Esophagus muscularis mucosa (tissue), 4 donors: ENCODE measurements at regions of chr14 and their contacts with region 1.

Region 1: DNA sequence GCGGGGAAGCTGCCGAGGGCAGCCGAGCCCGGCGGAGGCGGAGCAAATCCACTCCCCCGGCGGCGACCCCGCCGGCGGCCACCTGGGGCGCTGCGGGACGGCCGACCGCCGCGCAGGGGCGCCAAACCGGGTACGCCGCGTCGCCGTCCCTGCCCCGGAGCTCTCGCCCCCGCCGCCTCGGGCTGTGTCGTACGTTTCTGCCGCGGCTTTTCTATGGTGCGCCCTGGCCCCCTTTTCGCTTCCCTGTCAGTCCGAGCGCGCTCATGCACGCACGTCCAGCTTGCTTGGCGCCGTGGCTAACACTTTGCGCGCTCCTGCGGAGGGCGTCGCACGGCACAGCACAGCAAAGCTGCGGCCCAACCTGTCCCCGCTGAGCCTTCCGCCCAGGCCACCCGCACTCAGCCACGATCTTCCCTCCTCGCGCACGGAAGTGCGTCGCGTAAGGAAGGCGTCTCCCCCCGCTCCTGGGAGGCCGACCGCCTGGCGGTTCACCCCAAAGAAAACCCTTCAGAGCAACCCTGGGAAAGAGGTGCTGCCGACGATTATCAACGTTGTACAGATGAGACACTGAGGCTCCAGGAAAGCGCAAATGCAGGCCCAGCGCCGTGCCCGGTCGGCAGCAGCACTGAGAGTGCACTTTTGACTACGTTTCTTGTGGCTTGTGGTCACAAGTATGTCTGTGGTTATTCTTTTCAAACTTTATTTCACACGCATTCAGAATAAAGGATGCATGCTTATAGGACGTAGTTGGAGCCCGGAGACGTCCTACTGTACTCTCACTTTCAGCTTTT is at the start of gene HECTD1:
- DNase-seq: peak; percentile 93
- H3K4me3 ChIP-seq: peak within 1 kb of the TSS; percentile 60 to 98 (median 84)
- H3K27ac ChIP-seq: peak within 1 kb of the TSS; percentile 93 to 100 (median 100)
- H3K4me1 ChIP-seq: peaks cover 16 to 52% (median 48%) of the 10 kb centered on the region in 4 donors
- H3K27me3 ChIP-seq: no peaks in the 10 kb centered on the region
- CTCF ChIP-seq: peak; percentile 67 to 92 (median 86)
- EP300 ChIP-seq: no peak
- POLR2A ChIP-seq: peak; percentile 16
- total RNA-seq, gene HECTD1: 177 to 224 (median 206) TPM

Region 2: GRCh38 chr14:31166271-31166710 is 41.7 kb before region 1 on chr14:
- intact Hi-C with region 1: loop called (anchors 5 kb)
- DNase-seq: no peak
- H3K4me3 ChIP-seq: no peak overlapping the region
- H3K27ac ChIP-seq: peak overlapping the region; percentile 76 to 84 (median 80)
- H3K4me1 ChIP-seq: peaks cover 16 to 48% (median 37%) of the 10 kb centered on the region in 4 donors
- H3K27me3 ChIP-seq: no peaks in the 10 kb centered on the region
- CTCF ChIP-seq: no peak
- EP300 ChIP-seq: no peak
- POLR2A ChIP-seq: no peak

Region 3: DNA sequence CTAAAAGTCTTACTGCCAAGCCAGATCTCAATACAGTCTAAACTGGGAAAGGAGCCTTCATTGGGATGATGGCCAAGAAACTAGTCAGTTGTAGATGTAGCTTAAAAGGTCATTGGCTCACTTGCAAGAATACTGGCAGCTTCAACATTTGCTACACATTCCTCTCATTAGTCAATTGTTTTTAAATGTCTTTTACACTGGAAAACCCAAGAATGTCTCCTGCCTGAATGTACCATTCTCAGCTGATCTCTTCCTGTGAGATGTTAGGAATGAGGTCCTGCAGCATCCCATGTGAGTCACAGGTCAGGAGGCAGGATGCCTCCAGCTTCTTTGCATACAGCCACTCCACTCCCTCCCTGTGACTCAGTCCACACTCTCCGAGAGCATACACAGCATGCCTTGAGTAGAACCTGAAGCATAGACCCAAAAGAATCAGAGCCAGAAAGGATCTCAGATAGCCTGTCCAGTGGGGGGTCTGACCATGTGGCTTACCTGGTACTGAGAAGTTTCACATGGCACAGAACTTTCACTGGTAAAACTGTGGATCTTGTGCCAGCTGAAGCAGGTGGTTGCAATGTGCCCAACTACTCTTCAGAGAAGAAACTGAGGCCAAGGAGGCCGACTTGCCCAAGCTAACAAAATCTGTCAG is 55.7 kb after region 1 on chr14:
- intact Hi-C with region 1: loop called (anchors 5 kb)
- DNase-seq: no peak
- H3K4me3 ChIP-seq: peak overlapping the region in 1 of 4 donors; percentile 14
- H3K27ac ChIP-seq: peak overlapping the region; percentile 84 to 91 (median 89)
- H3K4me1 ChIP-seq: peaks cover 38 to 57% (median 49%) of the 10 kb centered on the region in 4 donors
- H3K27me3 ChIP-seq: no peaks in the 10 kb centered on the region
- CTCF ChIP-seq: no peak
- EP300 ChIP-seq: no peak
- POLR2A ChIP-seq: no peak

Region 4: DNA sequence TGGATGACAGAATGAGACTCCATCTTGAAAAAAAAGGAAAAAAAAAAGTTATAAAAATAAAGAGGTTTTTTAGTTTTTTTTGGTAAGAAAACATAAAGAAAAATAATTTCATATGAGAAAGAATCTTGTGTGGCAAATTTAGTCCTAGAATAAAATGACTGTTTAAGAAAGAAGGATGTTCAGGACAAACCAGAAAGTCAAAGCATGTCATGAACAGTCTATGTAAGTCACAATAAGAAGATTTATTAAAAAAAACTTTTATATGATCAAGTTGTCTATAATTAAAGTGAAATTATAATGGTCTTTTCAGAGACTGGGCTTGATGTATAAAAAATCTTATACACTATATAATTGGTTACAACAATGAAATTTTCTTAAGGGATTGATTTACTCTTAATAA is 67.8 kb after region 1 on chr14:
- intact Hi-C with region 1: no loop called
- DNase-seq: no peak
- H3K4me3 ChIP-seq: no peak overlapping the region
- H3K27ac ChIP-seq: no peak overlapping the region
- H3K4me1 ChIP-seq: peaks cover 0 to 9% (median 7%) of the 10 kb centered on the region in 4 donors
- H3K27me3 ChIP-seq: no peaks in the 10 kb centered on the region
- CTCF ChIP-seq: no peak
- EP300 ChIP-seq: no peak
- POLR2A ChIP-seq: no peak

Region 5: DNA sequence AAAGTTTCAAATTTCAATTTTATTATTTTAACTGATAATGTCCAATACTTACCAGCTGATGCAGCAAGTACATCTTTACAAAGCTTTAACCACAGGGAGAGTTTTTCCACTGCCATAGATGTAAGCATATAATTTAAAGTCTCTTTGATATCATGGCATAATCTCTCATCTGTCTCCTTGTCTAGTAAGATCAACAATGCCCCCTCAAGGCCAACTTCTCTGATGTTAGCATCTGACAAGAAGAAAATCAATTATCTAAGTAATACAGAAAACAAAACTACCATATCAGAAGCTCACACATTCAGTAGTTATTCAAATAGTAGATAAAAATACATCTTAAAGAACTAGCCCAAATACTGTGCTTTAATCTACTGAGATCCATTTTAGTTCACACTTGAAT is 118.2 kb after region 1 on chr14:
- intact Hi-C with region 1: loop called (anchors 10 kb)
- DNase-seq: no peak
- H3K4me3 ChIP-seq: no peak overlapping the region
- H3K27ac ChIP-seq: no peak overlapping the region
- H3K4me1 ChIP-seq: peaks cover 0 to 14% (median 13%) of the 10 kb centered on the region in 4 donors
- H3K27me3 ChIP-seq: no peaks in the 10 kb centered on the region
- CTCF ChIP-seq: no peak
- EP300 ChIP-seq: no peak
- POLR2A ChIP-seq: no peak

Region 6: GRCh38 chr14:31357279-31357678 is 149.3 kb after region 1 on chr14:
- intact Hi-C with region 1: loop called (anchors 10 kb)
- DNase-seq: no peak
- H3K4me3 ChIP-seq: no peak overlapping the region
- H3K27ac ChIP-seq: no peak overlapping the region
- H3K4me1 ChIP-seq: peaks cover 4 to 10% (median 6%) of the 10 kb centered on the region in 4 donors
- H3K27me3 ChIP-seq: no peaks in the 10 kb centered on the region
- CTCF ChIP-seq: no peak
- EP300 ChIP-seq: no peak
- POLR2A ChIP-seq: no peak

Region 7: DNA sequence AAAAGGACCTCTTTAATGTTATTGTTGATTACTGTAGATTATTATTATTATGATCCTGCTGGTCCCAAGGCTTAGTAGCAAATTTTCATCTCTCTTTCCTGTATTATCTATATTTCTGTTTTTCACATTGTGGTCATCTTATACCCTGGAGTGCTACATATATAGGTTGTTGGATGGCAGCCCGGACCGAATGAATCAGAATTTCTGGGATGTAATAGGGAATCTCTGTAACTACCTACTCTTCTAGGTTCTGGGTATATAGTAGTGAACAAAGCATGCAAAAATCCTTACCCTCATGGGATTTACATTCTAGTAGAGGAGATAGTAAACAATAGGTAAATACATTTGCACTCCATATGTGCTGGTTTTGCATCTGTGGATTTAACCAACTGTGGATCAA is 384.7 kb after region 1 on chr14:
- intact Hi-C with region 1: no loop called
- DNase-seq: no peak
- H3K4me3 ChIP-seq: no peak overlapping the region
- H3K27ac ChIP-seq: no peak overlapping the region
- H3K4me1 ChIP-seq: peaks cover 0 to 26% (median 17%) of the 10 kb centered on the region in 4 donors
- H3K27me3 ChIP-seq: no peaks in the 10 kb centered on the region
- CTCF ChIP-seq: no peak
- EP300 ChIP-seq: no peak
- POLR2A ChIP-seq: no peak